ENCODE measurements at regions of chr3 and their contacts with region 1.

Region 1: GRCh38 chr3:186277268-186277909 is 84.6 kb downstream of the DGKG start:
- DNase-seq: peak; percentile 49
- H3K4me3 ChIP-seq: no peak overlapping the region
- H3K27ac ChIP-seq: no peak overlapping the region
- H3K4me1 ChIP-seq: no peaks in the 10 kb centered on the region
- H3K27me3 ChIP-seq: peaks cover 0 to 3% of the 10 kb centered on the region in 2 experiments
- CTCF ChIP-seq: peak; percentile 20 to 41
- POLR2A ChIP-seq: no peak

Region 2: GRCh38 chr3:185976977-185977678 is 300.3 kb before region 1 on chr3:
- CTCF ChIA-PET with region 1: interaction called, 89 read pairs
- POLR2A ChIA-PET with region 1: no interaction called
- dilution Hi-C with region 1: no loop called
- intact Hi-C with region 1: no loop called
- DNase-seq: peak; percentile 75
- H3K4me3 ChIP-seq: no peak overlapping the region
- H3K27ac ChIP-seq: no peak overlapping the region
- H3K4me1 ChIP-seq: peaks cover 6% of the 10 kb centered on the region
- H3K27me3 ChIP-seq: no peaks in the 10 kb centered on the region
- CTCF ChIP-seq: peak; percentile 85 to 93
- POLR2A ChIP-seq: no peak

Region 3: DNA sequence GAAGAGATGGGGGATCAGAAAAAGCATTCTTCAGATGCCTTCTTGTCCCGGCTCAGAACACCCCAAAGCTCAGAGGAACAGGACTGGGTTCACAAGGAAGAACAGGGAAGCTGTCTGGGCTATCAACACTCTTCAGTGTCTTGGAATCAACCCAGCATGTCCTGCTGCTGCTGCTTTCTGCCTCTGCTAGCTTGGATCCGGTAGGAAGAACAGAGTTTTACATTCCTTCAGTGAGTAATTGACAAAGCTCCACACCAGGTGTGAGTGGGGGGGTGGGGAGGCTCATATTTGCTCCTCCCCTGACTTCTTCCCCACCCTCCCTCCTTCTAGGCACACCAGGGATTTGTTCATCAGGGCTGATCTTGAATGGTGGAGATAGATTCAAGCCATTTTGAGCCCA is 155.4 kb before region 1 on chr3:
- CTCF ChIA-PET with region 1: no interaction called
- POLR2A ChIA-PET with region 1: no interaction called
- dilution Hi-C with region 1: no loop called
- intact Hi-C with region 1: no loop called
- DNase-seq: no peak
- H3K4me3 ChIP-seq: no peak overlapping the region
- H3K27ac ChIP-seq: no peak overlapping the region
- H3K4me1 ChIP-seq: no peaks in the 10 kb centered on the region
- H3K27me3 ChIP-seq: peaks cover 14 to 16% of the 10 kb centered on the region in 2 experiments
- CTCF ChIP-seq: no peak
- POLR2A ChIP-seq: no peak

Region 4: GRCh38 chr3:186239321-186239720 is 38.1 kb before region 1 on chr3:
- CTCF ChIA-PET with region 1: no interaction called
- POLR2A ChIA-PET with region 1: no interaction called
- dilution Hi-C with region 1: no loop called
- intact Hi-C with region 1: no loop called
- DNase-seq: no peak
- H3K4me3 ChIP-seq: no peak overlapping the region
- H3K27ac ChIP-seq: no peak overlapping the region
- H3K4me1 ChIP-seq: no peaks in the 10 kb centered on the region
- H3K27me3 ChIP-seq: peaks cover 0 to 3% of the 10 kb centered on the region in 2 experiments
- CTCF ChIP-seq: no peak
- POLR2A ChIP-seq: no peak

Region 5: GRCh38 chr3:186259612-186260383 is 17.6 kb before region 1 on chr3:
- CTCF ChIA-PET with region 1: interaction called, 22 read pairs
- POLR2A ChIA-PET with region 1: no interaction called
- dilution Hi-C with region 1: no loop called
- intact Hi-C with region 1: no loop called
- DNase-seq: peak; percentile 58
- H3K4me3 ChIP-seq: no peak overlapping the region
- H3K27ac ChIP-seq: no peak overlapping the region
- H3K4me1 ChIP-seq: no peaks in the 10 kb centered on the region
- H3K27me3 ChIP-seq: no peaks in the 10 kb centered on the region
- CTCF ChIP-seq: peak; percentile 87 to 98
- POLR2A ChIP-seq: no peak

Measured in endothelial cell of umbilical vein (primary cell).